Naive thymus-derived CD8-positive, alpha-beta T cell (primary cell): ENCODE measurements at regions of chr3 and their contacts with region 1.

Region 1: GRCh38 chr3:194486540-194487288 is at the start of gene ATP13A3:
- DNase-seq: peak; percentile 86 to 94 (median 90)
- ATAC-seq: peak; percentile 76 to 86
- H3K4me3 Mint-ChIP-seq: peak within 1 kb of the TSS; percentile 66 to 96 (median 92)
- H3K27ac Mint-ChIP-seq: peak within 1 kb of the TSS; percentile 89 to 98 (median 94)
- H3K4me1 Mint-ChIP-seq: peaks cover 30 to 63% (median 40%) of the 10 kb centered on the region in 4 donors
- H3K27me3 Mint-ChIP-seq: no peaks in the 10 kb centered on the region
- polyA plus RNA-seq, gene ATP13A3: 5.9 to 13.2 (median 10.6) TPM

Region 2: DNA sequence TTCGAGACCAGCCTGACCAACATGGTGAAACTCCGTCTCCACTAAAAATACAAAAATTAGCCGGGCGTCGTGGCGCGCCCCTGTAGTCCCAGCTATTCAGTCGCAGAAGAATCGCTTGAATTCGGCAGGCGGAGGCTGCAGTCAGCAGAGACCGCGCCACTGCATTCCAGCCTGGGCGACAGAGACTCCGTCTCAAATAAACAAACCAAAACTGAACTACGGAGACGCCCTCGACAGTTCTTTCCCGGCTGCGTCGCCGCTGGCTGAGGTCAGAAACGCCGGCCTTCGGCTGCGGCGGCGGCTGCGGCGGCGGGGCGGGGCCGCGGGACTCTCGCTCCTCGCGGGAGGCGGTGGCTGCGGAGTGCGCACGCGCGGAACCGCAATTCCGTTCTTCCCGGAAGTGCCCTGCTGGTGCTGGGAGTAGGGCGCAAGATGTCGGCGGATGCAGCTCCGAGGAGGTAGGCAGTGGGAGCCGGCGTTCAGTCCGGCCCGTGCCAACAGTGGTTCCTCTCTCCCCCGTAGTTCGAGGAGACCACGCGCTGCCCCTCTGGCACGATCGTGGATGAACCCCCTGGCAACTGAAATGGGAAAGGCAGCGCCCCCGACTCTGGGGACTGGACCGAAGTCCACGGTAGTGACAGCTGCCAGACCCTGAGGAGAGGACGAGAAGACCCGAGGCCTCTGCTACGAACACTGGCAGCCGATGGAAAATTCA is 97.0 kb after region 1 on chr3:
- POLR2A ChIA-PET with region 1: interaction called, 14 read pairs
- DNase-seq: peak; percentile 83 to 95 (median 90)
- ATAC-seq: peak; percentile 92 to 93
- H3K4me3 Mint-ChIP-seq: peak overlapping the region; percentile 89 to 95 (median 93)
- H3K27ac Mint-ChIP-seq: peak overlapping the region; percentile 94 to 98 (median 96)
- H3K4me1 Mint-ChIP-seq: peaks cover 9 to 16% (median 14%) of the 10 kb centered on the region in 4 donors
- H3K27me3 Mint-ChIP-seq: no peaks in the 10 kb centered on the region